Activated B cell treated with CpG ODN at 0.5 μM for 24 hours (primary cell): ENCODE measurements at regions of chr13 and their contacts with region 1.

Region 1: GRCh38 chr13:74070065-74070464 is 64.1 kb downstream of the KLF12 start:
- DNase-seq: no peak
- ATAC-seq: no peak
- H3K4me3 Mint-ChIP-seq: peak overlapping the region; percentile 21
- H3K27ac Mint-ChIP-seq: peak overlapping the region; percentile 74
- H3K4me1 Mint-ChIP-seq: peaks cover 76% of the 10 kb centered on the region
- H3K27me3 Mint-ChIP-seq: no peaks in the 10 kb centered on the region
- CTCF ChIP-seq: no peak

Region 2: DNA sequence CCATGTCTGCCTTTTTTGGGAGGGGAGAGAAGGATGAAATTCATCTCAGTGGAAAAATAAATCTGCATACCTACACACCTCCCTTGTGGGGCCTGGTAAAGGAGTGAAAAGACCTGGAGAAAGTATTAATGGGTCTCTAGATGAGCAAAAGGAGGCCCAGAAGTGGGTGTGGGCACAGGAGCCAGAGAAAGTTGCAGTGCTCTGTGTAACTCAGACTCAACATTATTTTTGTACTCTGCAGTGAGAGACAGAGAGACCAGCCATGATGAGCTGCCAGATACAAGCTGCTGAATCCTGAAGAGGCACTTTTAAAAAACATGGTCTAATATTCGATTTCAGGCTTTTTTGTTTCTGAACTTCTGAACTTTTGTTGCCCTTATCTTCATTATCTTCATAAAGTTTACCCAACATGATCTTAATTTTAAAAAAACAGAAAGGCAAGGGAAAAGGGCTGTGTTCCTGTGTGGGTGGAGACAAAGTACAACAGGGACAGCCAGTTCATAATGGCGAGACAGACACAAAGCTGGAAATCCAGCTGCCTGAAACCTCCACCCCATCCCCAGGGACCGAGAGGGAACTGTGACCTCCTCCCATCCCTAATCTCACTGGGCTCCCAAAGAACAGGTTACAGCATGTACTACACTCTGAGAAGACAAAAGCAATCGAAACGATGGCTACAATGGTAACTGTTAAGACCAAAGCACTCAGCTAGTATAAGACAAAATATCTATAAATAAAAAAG is 13.1 kb before region 1 on chr13:
- CTCF ChIA-PET with region 1: no interaction called
- POLR2A ChIA-PET with region 1: interaction called, 10 read pairs
- intact Hi-C with region 1: loop called (anchors 1 kb)
- DNase-seq: no peak
- ATAC-seq: no peak
- H3K4me3 Mint-ChIP-seq: no peak overlapping the region
- H3K27ac Mint-ChIP-seq: peak overlapping the region; percentile 44
- H3K4me1 Mint-ChIP-seq: peaks cover 84% of the 10 kb centered on the region
- H3K27me3 Mint-ChIP-seq: no peaks in the 10 kb centered on the region
- CTCF ChIP-seq: no peak

Region 3: GRCh38 chr13:75687150-75687763 is 1617.2 kb after region 1 on chr13:
- CTCF ChIA-PET with region 1: no interaction called
- POLR2A ChIA-PET with region 1: no interaction called
- intact Hi-C with region 1: no loop called
- DNase-seq: no peak
- ATAC-seq: no peak
- H3K4me3 Mint-ChIP-seq: no peak overlapping the region
- H3K27ac Mint-ChIP-seq: no peak overlapping the region
- H3K4me1 Mint-ChIP-seq: no peaks in the 10 kb centered on the region
- H3K27me3 Mint-ChIP-seq: no peaks in the 10 kb centered on the region
- CTCF ChIP-seq: no peak